Naive thymus-derived CD4-positive, alpha-beta T cell (primary cell): ENCODE measurements at regions of chr13 and their contacts with region 1.

Region 1: DNA sequence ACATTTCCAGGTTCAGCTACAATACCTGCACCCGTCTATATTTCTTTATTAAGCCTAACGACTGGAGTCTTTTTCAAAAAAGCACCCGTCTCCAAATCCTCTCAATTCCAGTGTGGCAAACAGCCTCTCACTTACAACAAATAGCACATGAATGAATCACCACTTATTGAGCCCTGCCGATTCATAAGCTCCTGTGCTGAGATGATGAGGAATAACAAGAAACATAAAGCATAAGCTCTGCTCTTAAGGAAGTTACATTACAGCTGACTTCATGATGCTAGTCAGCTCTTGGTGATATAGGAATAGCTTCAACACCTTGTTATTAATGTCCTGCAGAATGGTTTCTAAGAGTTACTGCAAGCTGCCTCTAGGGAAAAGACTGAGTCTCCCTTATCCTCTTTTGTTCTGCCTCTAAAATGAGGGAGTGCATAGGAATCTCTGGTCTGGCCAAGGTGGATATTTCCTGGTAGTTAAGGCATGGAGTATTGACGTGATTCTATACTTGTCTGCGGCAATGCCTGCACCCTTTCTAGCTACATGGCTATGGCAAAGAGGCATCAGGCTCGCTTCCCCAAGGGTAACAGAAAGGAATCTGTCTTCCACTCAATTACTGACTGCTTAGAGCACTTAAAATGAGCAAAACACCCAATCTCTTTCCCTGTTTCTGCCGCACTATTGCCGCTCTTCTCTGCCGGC is 195.7 kb downstream of the KLF12 start:
- DNase-seq: no peak
- ATAC-seq: no peak
- H3K4me3 ChIP-seq: no peak overlapping the region
- H3K4me3 Mint-ChIP-seq: no peak overlapping the region
- H3K27ac ChIP-seq: no peak overlapping the region
- H3K27ac Mint-ChIP-seq: peak overlapping the region in 3 of 9 donors; percentile 29 to 57 (median 33)
- H3K4me1 ChIP-seq: peaks cover 22 to 38% of the 10 kb centered on the region in 2 donors
- H3K4me1 Mint-ChIP-seq: peaks cover 40 to 94% (median 83%) of the 10 kb centered on the region in 7 donors
- H3K27me3 ChIP-seq: no peaks in the 10 kb centered on the region
- H3K27me3 Mint-ChIP-seq: no peaks in the 10 kb centered on the region

Region 2: GRCh38 chr13:73924607-73925006 is 13.9 kb before region 1 on chr13:
- CTCF ChIA-PET with region 1: no interaction called
- POLR2A ChIA-PET with region 1: interaction called, 4 read pairs
- intact Hi-C with region 1: loop called in 1 of 2 experiments (anchors 1 kb)
- DNase-seq: no peak
- ATAC-seq: no peak
- H3K4me3 ChIP-seq: no peak overlapping the region
- H3K4me3 Mint-ChIP-seq: peak overlapping the region in 6 of 10 donors; percentile 10 to 49 (median 41)
- H3K27ac ChIP-seq: no peak overlapping the region
- H3K27ac Mint-ChIP-seq: peak overlapping the region in 5 of 9 donors; percentile 12 to 45 (median 33)
- H3K4me1 ChIP-seq: peaks cover 10 to 38% of the 10 kb centered on the region in 2 donors
- H3K4me1 Mint-ChIP-seq: peaks cover 21 to 95% (median 85%) of the 10 kb centered on the region in 7 donors
- H3K27me3 ChIP-seq: no peaks in the 10 kb centered on the region
- H3K27me3 Mint-ChIP-seq: no peaks in the 10 kb centered on the region

Region 3: GRCh38 chr13:73954808-73955207 is 16.3 kb after region 1 on chr13:
- CTCF ChIA-PET with region 1: no interaction called
- POLR2A ChIA-PET with region 1: interaction called, 5 read pairs
- intact Hi-C with region 1: loop called in 1 of 2 experiments (anchors 2 kb)
- DNase-seq: no peak
- ATAC-seq: no peak
- H3K4me3 ChIP-seq: no peak overlapping the region
- H3K4me3 Mint-ChIP-seq: no peak overlapping the region
- H3K27ac ChIP-seq: no peak overlapping the region
- H3K27ac Mint-ChIP-seq: no peak overlapping the region
- H3K4me1 ChIP-seq: peaks cover 0 to 13% of the 10 kb centered on the region in 2 donors
- H3K4me1 Mint-ChIP-seq: peaks cover 11 to 83% (median 73%) of the 10 kb centered on the region in 7 donors
- H3K27me3 ChIP-seq: no peaks in the 10 kb centered on the region
- H3K27me3 Mint-ChIP-seq: no peaks in the 10 kb centered on the region

Region 4: DNA sequence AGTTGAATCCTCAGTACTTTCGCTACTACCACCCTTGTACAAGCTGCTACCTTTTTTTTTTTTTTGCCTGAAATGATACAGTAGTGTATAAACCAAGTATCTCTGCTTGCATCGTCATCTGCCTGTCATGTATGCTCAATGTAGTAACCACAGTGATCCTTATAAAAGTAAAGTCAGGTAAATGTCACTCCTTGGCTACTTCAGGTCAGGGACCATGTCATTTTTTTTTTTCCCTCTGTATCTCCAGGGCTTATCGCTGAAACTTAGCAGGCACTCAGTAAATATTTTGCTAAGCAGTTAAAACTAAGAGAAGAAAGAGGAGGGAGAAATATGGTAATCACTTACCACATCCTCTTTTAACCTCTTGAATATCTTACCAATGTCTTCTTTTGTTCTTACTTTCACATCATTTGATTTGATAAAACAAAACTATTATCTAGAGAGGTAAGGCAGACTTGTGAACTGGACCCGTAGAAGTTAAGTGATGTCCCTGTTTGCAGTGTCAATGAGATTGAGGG is 292.5 kb after region 1 on chr13:
- CTCF ChIA-PET with region 1: no interaction called
- POLR2A ChIA-PET with region 1: no interaction called
- intact Hi-C with region 1: loop called in 1 of 2 experiments (anchors 5 kb)
- DNase-seq: peak in 7 of 9 donors; percentile 37 to 78 (median 69)
- ATAC-seq: peak; percentile 85
- H3K4me3 ChIP-seq: peak overlapping the region; percentile 61
- H3K4me3 Mint-ChIP-seq: peak overlapping the region; percentile 72 to 87 (median 84)
- H3K27ac ChIP-seq: peak overlapping the region; percentile 70
- H3K27ac Mint-ChIP-seq: peak overlapping the region; percentile 86 to 97 (median 90)
- H3K4me1 ChIP-seq: peaks cover 0 to 29% of the 10 kb centered on the region in 2 donors
- H3K4me1 Mint-ChIP-seq: peaks cover 8 to 62% (median 52%) of the 10 kb centered on the region in 7 donors
- H3K27me3 ChIP-seq: no peaks in the 10 kb centered on the region
- H3K27me3 Mint-ChIP-seq: no peaks in the 10 kb centered on the region